ENCODE measurements at regions of chr4 and their contacts with region 1.

Region 1: DNA sequence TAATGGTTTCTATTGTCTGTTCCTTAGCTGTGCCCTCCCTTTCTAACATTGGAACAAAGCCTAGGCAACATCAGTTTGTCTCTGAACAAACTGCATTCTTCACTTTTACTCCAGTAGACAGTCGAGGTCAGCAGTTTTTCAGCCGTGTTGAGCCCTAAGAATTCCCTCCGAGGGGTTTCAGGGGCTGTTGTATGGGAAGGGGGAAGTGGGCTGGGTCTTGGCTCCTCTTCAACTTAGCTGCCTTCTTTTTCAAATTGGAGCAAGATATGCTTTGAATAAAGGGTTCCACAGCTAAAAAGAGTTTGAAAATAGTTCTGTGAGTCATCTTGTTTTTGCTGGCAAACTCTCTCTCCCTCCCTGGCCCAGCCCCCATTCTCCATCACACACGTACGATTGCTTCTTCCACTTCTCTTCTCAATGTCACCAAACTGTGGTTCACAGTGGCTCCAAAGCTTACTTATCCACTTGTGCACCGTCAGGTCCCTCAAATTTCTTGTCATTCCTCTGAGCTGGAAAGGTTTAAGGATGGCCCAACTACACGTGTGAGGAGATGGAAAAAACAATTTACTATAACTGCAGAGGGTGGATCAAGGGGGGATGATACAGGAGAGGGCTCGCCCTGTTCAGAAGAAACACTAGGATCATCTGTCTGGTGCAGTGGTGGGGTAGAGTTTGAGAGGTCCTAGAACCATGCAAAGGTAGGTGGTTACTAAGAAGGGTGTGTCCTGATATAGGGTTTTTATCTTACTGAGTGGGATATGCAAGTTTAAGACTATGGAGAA is 9.2 kb upstream of the MAML3 start:
- DNase-seq: peak; percentile 29
- H3K4me3 ChIP-seq: no peak overlapping the region
- H3K27ac ChIP-seq: peak overlapping the region; percentile 37
- H3K4me1 ChIP-seq: peaks cover 13% of the 10 kb centered on the region
- H3K27me3 ChIP-seq: no peaks in the 10 kb centered on the region
- CTCF ChIP-seq: no peak

Region 2: GRCh38 chr4:139934057-139934707 is 229.0 kb before region 1 on chr4:
- CTCF ChIA-PET with region 1: no interaction called
- dilution Hi-C with region 1: no loop called
- in situ Hi-C with region 1: no loop called
- intact Hi-C with region 1: no loop called
- DNase-seq: no peak
- H3K4me3 ChIP-seq: no peak overlapping the region
- H3K27ac ChIP-seq: no peak overlapping the region
- H3K4me1 ChIP-seq: no peaks in the 10 kb centered on the region
- H3K27me3 ChIP-seq: peaks cover 2% of the 10 kb centered on the region
- CTCF ChIP-seq: no peak

Region 3: DNA sequence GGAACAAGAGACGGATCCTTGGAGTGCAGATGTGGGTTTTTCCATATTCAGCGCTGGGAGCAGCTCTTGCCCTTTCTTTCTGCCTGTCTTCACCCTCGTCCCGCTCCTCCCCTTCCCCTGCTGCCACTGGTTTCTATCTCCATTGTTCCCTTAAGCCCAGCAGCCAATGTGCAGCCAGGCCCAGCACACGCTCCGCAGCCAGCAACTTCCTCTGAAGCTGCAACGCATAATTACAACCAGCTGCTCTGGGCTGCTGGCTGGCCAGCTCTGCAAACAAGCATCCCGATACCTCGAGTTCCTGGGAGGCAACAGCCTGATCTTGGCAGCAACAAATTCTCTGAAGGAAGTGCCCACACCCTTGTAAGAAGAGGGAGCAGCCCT is 74.4 kb after region 1 on chr4:
- CTCF ChIA-PET with region 1: no interaction called
- dilution Hi-C with region 1: loop called (anchors 5 kb)
- in situ Hi-C with region 1: loop called (anchors 10 kb)
- intact Hi-C with region 1: no loop called
- DNase-seq: no peak
- H3K4me3 ChIP-seq: no peak overlapping the region
- H3K27ac ChIP-seq: no peak overlapping the region
- H3K4me1 ChIP-seq: peaks cover 14% of the 10 kb centered on the region
- H3K27me3 ChIP-seq: no peaks in the 10 kb centered on the region
- CTCF ChIP-seq: no peak

Measured in mammary epithelial cell (primary cell).